ENCODE measurements at regions of chr3 and their contacts with region 1.

Region 1: DNA sequence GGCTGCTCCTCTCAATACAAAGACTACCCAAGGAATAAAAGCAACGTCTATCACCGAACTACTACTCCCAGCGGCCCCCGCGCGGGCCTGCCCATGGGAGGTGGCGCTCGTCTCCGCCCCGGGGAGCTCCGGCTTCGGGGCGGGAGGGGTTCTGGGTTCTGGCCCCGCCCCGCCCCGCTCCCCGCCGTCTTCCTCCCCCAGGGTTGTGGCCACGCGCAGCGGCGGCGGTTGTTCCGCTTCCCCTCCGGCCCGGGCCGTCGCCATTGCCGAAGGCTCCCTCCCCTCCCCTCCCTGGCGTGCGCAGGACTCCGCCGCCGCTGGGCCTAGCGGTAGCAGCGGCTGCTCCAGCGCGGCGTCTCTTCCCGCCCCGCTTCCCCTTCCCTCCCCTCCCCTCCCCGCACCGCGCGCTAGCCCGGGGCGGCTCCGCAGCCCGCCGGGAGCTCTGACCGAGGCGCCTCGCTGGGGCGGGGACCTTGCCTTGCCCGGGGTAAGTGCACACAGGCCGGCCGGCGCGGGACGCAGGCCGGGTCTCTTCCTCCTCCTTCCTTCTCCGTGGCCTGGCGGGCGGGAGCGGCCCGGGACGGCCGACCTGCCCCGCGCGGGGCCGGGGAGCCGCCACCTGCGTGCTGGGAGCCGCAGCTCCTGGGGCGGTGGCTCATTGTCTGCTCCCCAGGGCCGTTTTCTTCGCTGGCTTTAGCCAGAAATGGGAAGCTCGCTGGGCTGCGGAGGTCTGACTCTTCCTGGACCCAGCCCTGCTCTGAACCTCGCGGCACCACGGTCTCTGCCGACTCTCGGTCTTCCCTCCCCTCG is at the start of gene PAK2:
- DNase-seq: peak; percentile 80 to 96 (median 92)
- ATAC-seq: peak; percentile 80
- H3K4me3 ChIP-seq: peak within 1 kb of the TSS; percentile 96
- H3K4me3 Mint-ChIP-seq: peak within 1 kb of the TSS; percentile 98
- H3K27ac ChIP-seq: peak within 1 kb of the TSS; percentile 86 to 95
- H3K27ac Mint-ChIP-seq: peak within 1 kb of the TSS; percentile 95
- H3K4me1 ChIP-seq: peaks cover 21% of the 10 kb centered on the region
- H3K4me1 Mint-ChIP-seq: peaks cover 35% of the 10 kb centered on the region
- H3K27me3 ChIP-seq: no peaks in the 10 kb centered on the region
- H3K27me3 Mint-ChIP-seq: no peaks in the 10 kb centered on the region
- CTCF ChIP-seq: no peak
- total RNA-seq, gene PAK2: 36.2 to 41.7 TPM

Region 2: GRCh38 chr3:196081791-196082618 is 657.9 kb before region 1 on chr3 and contains the start of gene TFRC:
- CTCF ChIA-PET with region 1: no interaction called
- POLR2A ChIA-PET with region 1: no interaction called
- intact Hi-C with region 1: loop called in 1 of 2 experiments (anchors 5 kb)
- DNase-seq: peak; percentile 88 to 98 (median 95)
- ATAC-seq: peak; percentile 92
- H3K4me3 ChIP-seq: peak within 1 kb of the TSS; percentile 60
- H3K4me3 Mint-ChIP-seq: peak within 1 kb of the TSS; percentile 91
- H3K27ac ChIP-seq: peak within 1 kb of the TSS; percentile 83 to 95
- H3K27ac Mint-ChIP-seq: peak within 1 kb of the TSS; percentile 89
- H3K4me1 ChIP-seq: peaks cover 42% of the 10 kb centered on the region
- H3K4me1 Mint-ChIP-seq: peaks cover 45% of the 10 kb centered on the region
- H3K27me3 ChIP-seq: no peaks in the 10 kb centered on the region
- H3K27me3 Mint-ChIP-seq: no peaks in the 10 kb centered on the region
- CTCF ChIP-seq: no peak
- total RNA-seq, gene TFRC: 154 to 159 TPM

Region 3: DNA sequence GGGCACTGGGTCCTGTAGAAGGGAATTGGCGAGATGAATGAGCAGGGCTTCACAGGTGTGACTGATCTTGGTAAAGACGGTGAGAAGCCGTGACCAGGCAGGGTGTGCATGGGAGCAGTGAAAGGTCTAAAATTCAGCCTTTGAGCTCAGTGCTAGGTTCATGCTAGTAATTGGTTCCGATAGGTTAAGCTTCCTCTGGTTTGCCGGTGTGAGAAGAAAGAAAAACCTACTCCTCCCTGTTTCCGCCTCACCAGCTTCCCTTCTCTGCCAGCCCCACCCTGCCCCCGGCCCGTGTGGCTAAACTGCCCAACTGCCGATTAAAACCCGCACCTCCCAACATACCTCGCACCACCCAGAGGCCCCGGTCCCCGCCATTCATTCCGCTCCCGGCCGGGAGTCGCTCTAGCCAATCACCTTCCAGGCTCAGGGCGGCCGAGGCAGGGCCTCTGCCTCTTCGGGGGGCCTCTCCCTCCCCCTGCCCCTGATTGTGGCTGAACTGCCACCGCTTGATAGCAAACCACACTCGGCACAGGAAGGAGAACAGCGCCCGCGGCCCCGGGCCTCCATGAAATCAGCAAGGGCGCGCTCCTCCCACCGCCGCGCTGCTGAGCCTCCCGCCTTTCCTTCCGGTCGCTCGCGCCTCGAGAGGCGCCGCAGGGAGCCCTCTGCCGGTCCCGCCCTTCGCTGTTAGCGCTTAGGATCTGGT is 107.7 kb before region 1 on chr3:
- CTCF ChIA-PET with region 1: no interaction called
- POLR2A ChIA-PET with region 1: interaction called, 12 read pairs
- intact Hi-C with region 1: no loop called
- DNase-seq: peak; percentile 72 to 96 (median 87)
- ATAC-seq: peak; percentile 83
- H3K4me3 ChIP-seq: peak overlapping the region; percentile 72
- H3K4me3 Mint-ChIP-seq: peak overlapping the region; percentile 90
- H3K27ac ChIP-seq: peak overlapping the region; percentile 90
- H3K27ac Mint-ChIP-seq: peak overlapping the region; percentile 94
- H3K4me1 ChIP-seq: peaks cover 69% of the 10 kb centered on the region
- H3K4me1 Mint-ChIP-seq: peaks cover 67% of the 10 kb centered on the region
- H3K27me3 ChIP-seq: no peaks in the 10 kb centered on the region
- H3K27me3 Mint-ChIP-seq: no peaks in the 10 kb centered on the region
- CTCF ChIP-seq: no peak

Region 4: DNA sequence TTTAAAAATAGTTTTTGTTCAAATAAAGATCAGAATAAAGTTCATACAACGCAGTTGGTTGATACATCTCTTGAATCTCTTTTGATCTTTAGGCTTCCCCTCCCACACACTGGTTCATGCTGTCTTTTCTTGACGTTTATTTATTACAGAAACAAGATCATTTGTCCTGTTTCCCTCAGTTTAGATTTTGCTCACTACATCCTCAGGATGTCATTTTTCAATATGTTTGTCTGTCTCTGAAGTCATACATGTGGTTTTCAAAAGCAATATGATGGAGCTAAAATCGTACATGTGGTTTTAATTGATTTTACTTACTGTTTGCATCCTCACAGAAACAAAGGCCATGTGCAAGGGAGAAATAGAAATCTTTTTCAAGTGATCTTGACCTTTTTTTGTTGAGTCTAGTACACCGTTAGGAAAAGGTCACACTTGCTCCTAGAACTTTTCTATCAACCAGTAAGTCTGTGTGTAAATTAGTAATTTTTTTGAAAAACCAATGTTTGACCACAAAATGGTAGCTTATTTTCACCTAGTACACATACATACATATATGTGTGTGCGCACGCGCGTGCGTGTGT is 64.1 kb after region 1 on chr3:
- CTCF ChIA-PET with region 1: no interaction called
- POLR2A ChIA-PET with region 1: no interaction called
- intact Hi-C with region 1: loop called in 1 of 2 experiments (anchors 2 kb)
- DNase-seq: peak in 3 of 14 experiments; percentile 1 to 20 (median 19)
- ATAC-seq: peak; percentile 85
- H3K4me3 ChIP-seq: no peak overlapping the region
- H3K4me3 Mint-ChIP-seq: no peak overlapping the region
- H3K27ac ChIP-seq: peak overlapping the region in 1 of 2 donors; percentile 4
- H3K27ac Mint-ChIP-seq: peak overlapping the region; percentile 61
- H3K4me1 ChIP-seq: no peaks in the 10 kb centered on the region
- H3K4me1 Mint-ChIP-seq: peaks cover 24% of the 10 kb centered on the region
- H3K27me3 ChIP-seq: no peaks in the 10 kb centered on the region
- H3K27me3 Mint-ChIP-seq: no peaks in the 10 kb centered on the region
- CTCF ChIP-seq: no peak

Region 5: DNA sequence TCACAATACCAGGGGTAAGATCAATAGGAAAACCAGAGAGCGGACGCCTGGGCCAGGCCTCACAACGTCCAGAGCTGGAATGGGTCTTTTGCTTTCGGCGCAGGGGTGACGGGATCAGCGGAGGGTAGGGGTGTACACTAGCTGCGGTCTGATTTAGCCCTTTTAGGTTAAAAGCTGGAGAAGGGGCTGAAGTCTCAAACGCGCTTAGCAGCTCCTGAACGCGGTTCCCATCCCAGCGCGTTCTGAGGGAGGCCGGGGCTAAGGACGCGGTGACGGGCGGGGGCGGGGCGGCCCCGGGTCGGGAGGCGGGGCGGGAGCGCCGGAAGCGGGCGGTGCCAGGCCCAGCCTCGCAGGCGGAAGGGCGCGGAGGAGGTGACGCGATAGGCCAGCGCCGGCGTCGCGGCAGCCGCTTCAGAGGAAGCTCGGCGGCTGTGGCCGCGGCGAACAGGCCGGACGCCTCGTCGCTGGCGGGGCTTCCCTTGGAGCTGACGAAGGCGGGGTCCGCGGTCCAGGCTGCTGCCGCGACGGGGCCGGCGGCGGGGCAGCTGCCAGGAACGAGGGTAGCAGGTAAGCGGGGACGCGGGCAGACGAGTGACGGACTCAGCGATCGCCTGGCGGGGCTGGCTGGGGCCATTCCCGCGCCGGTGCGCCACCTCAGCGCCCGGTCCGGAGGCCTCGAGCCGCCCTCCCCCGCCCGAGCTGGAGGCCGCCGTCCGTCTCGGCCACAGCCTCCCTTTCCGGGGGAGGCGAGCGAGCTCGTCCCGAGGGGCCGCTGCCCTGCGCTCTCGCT is 127.8 kb after region 1 on chr3 and contains the start of gene SENP5:
- CTCF ChIA-PET with region 1: no interaction called
- POLR2A ChIA-PET with region 1: interaction called, 21 read pairs
- intact Hi-C with region 1: loop called in 1 of 2 experiments (anchors 2 kb)
- DNase-seq: peak; percentile 75 to 96 (median 86)
- ATAC-seq: peak; percentile 96
- H3K4me3 ChIP-seq: peak within 1 kb of the TSS; percentile 94
- H3K4me3 Mint-ChIP-seq: peak within 1 kb of the TSS; percentile 98
- H3K27ac ChIP-seq: peak within 1 kb of the TSS; percentile 85 to 94
- H3K27ac Mint-ChIP-seq: peak within 1 kb of the TSS; percentile 93
- H3K4me1 ChIP-seq: peaks cover 31% of the 10 kb centered on the region
- H3K4me1 Mint-ChIP-seq: peaks cover 38% of the 10 kb centered on the region
- H3K27me3 ChIP-seq: no peaks in the 10 kb centered on the region
- H3K27me3 Mint-ChIP-seq: no peaks in the 10 kb centered on the region
- CTCF ChIP-seq: no peak
- total RNA-seq, gene SENP5: 62.7 to 64.7 TPM